Calu3 (cell line): ENCODE measurements at regions of chr4 and their contacts with region 1.

Region 1: GRCh38 chr4:70601422-70602039 is 9.5 kb downstream of the AMBN start:
- DNase-seq: peak; percentile 68
- H3K4me3 Mint-ChIP-seq: no peak overlapping the region
- H3K27ac Mint-ChIP-seq: no peak overlapping the region
- H3K4me1 Mint-ChIP-seq: no peaks in the 10 kb centered on the region
- H3K27me3 Mint-ChIP-seq: no peaks in the 10 kb centered on the region
- CTCF ChIP-seq: peak; percentile 70

Region 2: DNA sequence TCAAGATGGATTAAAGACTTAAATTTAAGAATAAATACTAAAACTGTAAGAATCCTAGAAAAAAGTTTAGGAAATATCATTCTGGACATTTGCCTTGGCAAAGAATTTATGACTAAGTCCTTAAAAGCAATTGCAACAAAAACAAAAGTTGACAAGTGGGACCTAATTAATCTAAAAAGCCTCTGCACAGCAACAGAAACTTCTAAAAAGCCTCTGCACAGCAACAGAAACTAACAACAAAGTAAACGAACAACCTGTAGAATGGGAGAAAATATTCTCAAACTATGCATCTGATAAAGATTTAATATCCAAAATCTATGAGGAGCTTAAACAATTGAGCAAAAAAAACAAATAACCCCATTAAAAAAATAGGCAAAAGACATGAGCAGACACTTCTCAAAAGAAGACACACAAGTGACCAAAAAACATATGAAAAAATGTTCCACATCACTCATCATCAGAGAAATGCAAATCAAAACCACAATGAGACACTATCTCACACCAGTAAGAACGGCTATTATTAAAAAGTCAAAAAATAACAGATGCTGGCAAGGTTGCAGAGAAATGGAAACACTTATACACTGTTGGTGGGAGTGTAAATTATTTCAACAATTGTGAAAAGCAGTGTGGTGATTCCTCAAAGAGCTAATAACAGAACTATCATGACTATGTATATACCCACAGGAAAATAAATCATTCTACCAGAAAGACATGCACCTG is 209.3 kb before region 1 on chr4:
- CTCF ChIA-PET with region 1: no interaction called
- intact Hi-C with region 1: no loop called
- DNase-seq: no peak
- H3K4me3 Mint-ChIP-seq: no peak overlapping the region
- H3K27ac Mint-ChIP-seq: no peak overlapping the region
- H3K4me1 Mint-ChIP-seq: no peaks in the 10 kb centered on the region
- H3K27me3 Mint-ChIP-seq: no peaks in the 10 kb centered on the region
- CTCF ChIP-seq: no peak

Region 3: GRCh38 chr4:70651864-70652506 is 50.5 kb after region 1 on chr4:
- CTCF ChIA-PET with region 1: interaction called, 5 read pairs
- intact Hi-C with region 1: loop called (anchors 1 kb)
- DNase-seq: no peak
- H3K4me3 Mint-ChIP-seq: no peak overlapping the region
- H3K27ac Mint-ChIP-seq: no peak overlapping the region
- H3K4me1 Mint-ChIP-seq: no peaks in the 10 kb centered on the region
- H3K27me3 Mint-ChIP-seq: no peaks in the 10 kb centered on the region
- CTCF ChIP-seq: peak; percentile 29

Region 4: GRCh38 chr4:70687821-70688794 is 86.6 kb after region 1 on chr4 and contains the start of gene UTP3:
- CTCF ChIA-PET with region 1: no interaction called
- intact Hi-C with region 1: loop called (anchors 5 kb)
- DNase-seq: peak; percentile 90
- H3K4me3 Mint-ChIP-seq: peak within 1 kb of the TSS; percentile 90
- H3K27ac Mint-ChIP-seq: peak within 1 kb of the TSS; percentile 84
- H3K4me1 Mint-ChIP-seq: peaks cover 13% of the 10 kb centered on the region
- H3K27me3 Mint-ChIP-seq: no peaks in the 10 kb centered on the region
- CTCF ChIP-seq: peak; percentile 70
- total RNA-seq, gene UTP3: 22.2 and 24.2 TPM in 2 replicates

Region 5: DNA sequence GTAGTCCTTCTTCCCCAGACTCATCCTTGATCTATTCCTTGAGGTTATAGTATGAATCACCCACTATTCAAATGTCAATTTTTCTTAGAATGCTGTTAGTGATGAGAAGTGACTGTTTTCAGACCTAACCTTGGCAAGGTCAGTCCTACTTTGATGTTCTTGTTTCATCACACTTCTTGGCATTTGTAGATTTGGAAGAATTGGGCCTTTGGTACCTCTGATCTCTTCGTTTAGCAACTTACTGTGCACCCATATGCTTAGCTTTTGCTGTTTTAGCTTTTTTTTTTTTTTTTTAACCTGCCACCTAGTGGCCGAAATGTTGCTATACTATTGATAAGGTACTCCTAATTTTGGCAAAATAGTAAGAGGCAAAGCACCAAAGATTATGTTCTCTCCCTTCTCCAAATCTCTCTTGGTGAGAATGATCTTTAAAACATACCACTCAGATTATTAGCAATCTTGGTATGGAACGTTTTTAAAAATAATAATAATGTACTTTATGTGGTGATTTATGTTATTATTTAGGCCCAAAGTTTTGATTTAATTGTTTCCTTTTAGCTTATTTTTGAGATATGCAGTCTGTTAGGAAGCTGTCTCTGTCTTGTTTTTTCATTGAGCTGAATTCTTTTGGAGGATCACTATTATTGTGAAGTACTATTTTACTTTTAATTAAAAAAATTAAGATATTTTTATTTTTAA is 408.5 kb after region 1 on chr4:
- CTCF ChIA-PET with region 1: no interaction called
- intact Hi-C with region 1: loop called (anchors 5 kb)
- DNase-seq: no peak
- H3K4me3 Mint-ChIP-seq: no peak overlapping the region
- H3K27ac Mint-ChIP-seq: no peak overlapping the region
- H3K4me1 Mint-ChIP-seq: no peaks in the 10 kb centered on the region
- H3K27me3 Mint-ChIP-seq: no peaks in the 10 kb centered on the region
- CTCF ChIP-seq: peak; percentile 15